CD8-positive, alpha-beta T cell (primary cell): ENCODE measurements at regions of chr2 and their contacts with region 1.

Region 1: GRCh38 chr2:71068218-71069035 is at the start of gene NAGK:
- DNase-seq: peak; percentile 95 to 99 (median 98)
- ATAC-seq: peak; percentile 82
- H3K4me3 ChIP-seq: peak within 1 kb of the TSS; percentile 77 to 87
- H3K4me3 Mint-ChIP-seq: peak within 1 kb of the TSS; percentile 95
- H3K27ac ChIP-seq: peak within 1 kb of the TSS; percentile 86 to 99
- H3K27ac Mint-ChIP-seq: peak within 1 kb of the TSS; percentile 99
- H3K4me1 ChIP-seq: peaks cover 43% of the 10 kb centered on the region
- H3K4me1 Mint-ChIP-seq: peaks cover 63% of the 10 kb centered on the region
- H3K27me3 ChIP-seq: no peaks in the 10 kb centered on the region
- H3K27me3 Mint-ChIP-seq: no peaks in the 10 kb centered on the region
- CTCF ChIP-seq: no peak
- total RNA-seq, gene NAGK: 58.9 to 67.7 TPM

Region 2: GRCh38 chr2:69386789-69387734 is 1681.4 kb before region 1 on chr2 and contains the start of gene GFPT1:
- CTCF ChIA-PET with region 1: no interaction called
- POLR2A ChIA-PET with region 1: no interaction called
- intact Hi-C with region 1: loop called in 1 of 2 experiments (anchors 10 kb)
- DNase-seq: peak; percentile 84 to 97 (median 93)
- ATAC-seq: peak; percentile 98
- H3K4me3 ChIP-seq: peak within 1 kb of the TSS; percentile 64 to 68
- H3K4me3 Mint-ChIP-seq: peak within 1 kb of the TSS; percentile 88
- H3K27ac ChIP-seq: peak within 1 kb of the TSS; percentile 65 to 70
- H3K27ac Mint-ChIP-seq: peak within 1 kb of the TSS; percentile 84
- H3K4me1 ChIP-seq: peaks cover 17% of the 10 kb centered on the region
- H3K4me1 Mint-ChIP-seq: peaks cover 45% of the 10 kb centered on the region
- H3K27me3 ChIP-seq: no peaks in the 10 kb centered on the region
- H3K27me3 Mint-ChIP-seq: no peaks in the 10 kb centered on the region
- CTCF ChIP-seq: no peak
- total RNA-seq, gene GFPT1: 26.5 to 30.9 TPM

Region 3: GRCh38 chr2:70977605-70978205 is 90.7 kb before region 1 on chr2:
- CTCF ChIA-PET with region 1: no interaction called
- POLR2A ChIA-PET with region 1: interaction called, 4 read pairs
- intact Hi-C with region 1: loop called in 1 of 2 experiments (anchors 1 kb)
- DNase-seq: peak in 2 of 9 experiments; percentile 49 to 55
- ATAC-seq: peak; percentile 27
- H3K4me3 ChIP-seq: peak overlapping the region; percentile 59 to 61
- H3K4me3 Mint-ChIP-seq: peak overlapping the region; percentile 85
- H3K27ac ChIP-seq: peak overlapping the region; percentile 44 to 73
- H3K27ac Mint-ChIP-seq: peak overlapping the region; percentile 89
- H3K4me1 ChIP-seq: peaks cover 17% of the 10 kb centered on the region
- H3K4me1 Mint-ChIP-seq: peaks cover 20% of the 10 kb centered on the region
- H3K27me3 ChIP-seq: no peaks in the 10 kb centered on the region
- H3K27me3 Mint-ChIP-seq: no peaks in the 10 kb centered on the region
- CTCF ChIP-seq: peak; percentile 4

Region 4: DNA sequence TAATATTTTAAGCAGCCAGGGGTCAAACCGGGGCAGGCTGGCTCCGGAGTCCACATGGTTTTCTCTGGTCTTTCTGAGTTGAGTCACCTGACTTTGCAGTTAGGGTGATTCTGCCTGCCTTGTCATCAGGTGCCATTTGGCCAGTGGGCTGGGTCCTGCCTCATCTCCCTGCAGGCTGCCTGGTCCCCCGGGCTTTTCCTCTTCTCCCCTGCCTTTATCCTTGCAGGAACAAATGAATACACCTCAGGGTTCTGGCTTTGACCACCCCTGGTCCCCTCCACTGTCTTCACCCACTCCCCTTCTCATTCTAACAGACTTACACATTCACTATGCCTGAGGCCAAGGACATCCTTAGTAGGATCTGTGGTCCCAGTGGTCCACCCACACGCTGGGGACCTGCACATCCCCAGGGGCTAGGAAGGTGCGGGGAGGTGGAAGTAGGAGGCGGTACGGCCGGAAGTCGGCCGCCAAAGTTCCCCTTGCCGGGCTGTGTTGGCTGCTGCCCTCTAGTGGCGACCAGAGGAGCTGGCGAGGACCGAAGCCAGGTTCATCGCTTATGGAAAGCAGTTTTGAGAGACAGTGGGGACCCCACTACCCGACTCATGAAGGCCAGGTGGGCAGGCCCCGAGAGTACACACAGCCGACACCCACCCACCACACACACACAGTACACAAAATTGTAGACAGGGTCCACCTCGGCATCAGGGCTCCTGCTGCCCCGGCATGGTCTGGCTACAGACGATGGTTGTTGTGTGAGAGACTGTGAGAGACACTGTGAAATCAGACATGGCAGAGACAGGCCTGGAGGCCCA is 67.4 kb before region 1 on chr2:
- CTCF ChIA-PET with region 1: interaction called, 6 read pairs
- POLR2A ChIA-PET with region 1: interaction called, 6 read pairs
- intact Hi-C with region 1: loop called in 1 of 2 experiments (anchors 5 kb)
- DNase-seq: peak; percentile 58 to 89 (median 81)
- ATAC-seq: peak; percentile 99
- H3K4me3 ChIP-seq: peak overlapping the region; percentile 39 to 44
- H3K4me3 Mint-ChIP-seq: peak overlapping the region; percentile 49
- H3K27ac ChIP-seq: peak overlapping the region in 1 of 2 experiments; percentile 48
- H3K27ac Mint-ChIP-seq: no peak overlapping the region
- H3K4me1 ChIP-seq: peaks cover 11% of the 10 kb centered on the region
- H3K4me1 Mint-ChIP-seq: peaks cover 12% of the 10 kb centered on the region
- H3K27me3 ChIP-seq: no peaks in the 10 kb centered on the region
- H3K27me3 Mint-ChIP-seq: peaks cover 5% of the 10 kb centered on the region
- CTCF ChIP-seq: peak; percentile 80

Region 5: GRCh38 chr2:71043531-71044407 is 24.7 kb before region 1 on chr2:
- CTCF ChIA-PET with region 1: no interaction called
- POLR2A ChIA-PET with region 1: no interaction called
- intact Hi-C with region 1: no loop called
- DNase-seq: no peak
- ATAC-seq: no peak
- H3K4me3 ChIP-seq: no peak overlapping the region
- H3K4me3 Mint-ChIP-seq: no peak overlapping the region
- H3K27ac ChIP-seq: no peak overlapping the region
- H3K27ac Mint-ChIP-seq: no peak overlapping the region
- H3K4me1 ChIP-seq: no peaks in the 10 kb centered on the region
- H3K4me1 Mint-ChIP-seq: no peaks in the 10 kb centered on the region
- H3K27me3 ChIP-seq: no peaks in the 10 kb centered on the region
- H3K27me3 Mint-ChIP-seq: peaks cover 7% of the 10 kb centered on the region
- CTCF ChIP-seq: no peak

Region 6: DNA sequence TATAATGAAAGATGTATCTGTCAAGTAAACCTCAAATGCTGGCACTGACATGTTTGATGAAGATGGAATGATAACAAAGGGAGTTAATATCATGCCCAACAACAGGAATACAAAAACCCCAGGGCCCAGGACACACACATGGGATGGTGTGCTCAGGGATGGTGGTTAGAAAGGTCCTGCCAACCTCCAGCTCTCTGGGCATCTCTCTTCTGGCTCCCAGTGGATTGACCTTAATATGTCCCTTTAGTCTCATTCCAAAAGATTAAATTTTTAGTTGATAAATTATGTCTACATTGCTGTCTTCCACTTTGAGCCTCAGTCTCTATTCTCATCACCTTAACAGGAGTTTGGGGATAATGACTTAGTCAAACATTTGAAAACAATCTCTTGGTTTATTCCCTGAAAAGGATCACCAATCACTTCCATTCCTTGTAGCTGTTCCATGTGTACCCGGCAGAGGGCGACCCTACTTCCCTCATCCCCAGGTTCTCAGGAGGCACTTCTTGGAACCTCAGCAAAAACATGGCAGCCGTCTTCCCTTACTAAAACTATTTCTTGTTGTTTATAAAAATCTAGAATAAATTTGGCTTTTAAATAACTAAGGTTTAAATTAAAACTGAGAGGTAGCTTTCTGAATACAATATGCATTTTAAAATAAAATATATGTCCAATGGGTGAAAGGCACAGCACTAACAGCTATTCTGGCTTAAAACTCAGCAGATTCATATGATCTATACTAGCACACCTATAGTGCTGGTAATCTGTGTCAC is 32.0 kb after region 1 on chr2:
- CTCF ChIA-PET with region 1: interaction called, 12 read pairs
- POLR2A ChIA-PET with region 1: interaction called, 7 read pairs
- intact Hi-C with region 1: no loop called
- DNase-seq: peak in 8 of 9 experiments; percentile 12 to 62 (median 44)
- ATAC-seq: peak; percentile 51
- H3K4me3 ChIP-seq: no peak overlapping the region
- H3K4me3 Mint-ChIP-seq: no peak overlapping the region
- H3K27ac ChIP-seq: no peak overlapping the region
- H3K27ac Mint-ChIP-seq: no peak overlapping the region
- H3K4me1 ChIP-seq: no peaks in the 10 kb centered on the region
- H3K4me1 Mint-ChIP-seq: no peaks in the 10 kb centered on the region
- H3K27me3 ChIP-seq: no peaks in the 10 kb centered on the region
- H3K27me3 Mint-ChIP-seq: peaks cover 7% of the 10 kb centered on the region
- CTCF ChIP-seq: peak; percentile 68

Region 7: GRCh38 chr2:71226965-71227560 is 158.6 kb after region 1 on chr2 and contains the start of gene PAIP2B:
- CTCF ChIA-PET with region 1: interaction called, 3 read pairs
- POLR2A ChIA-PET with region 1: interaction called, 10 read pairs
- intact Hi-C with region 1: loop called (anchors 1 to 2 kb)
- DNase-seq: peak; percentile 95 to 99 (median 96)
- ATAC-seq: peak; percentile 89
- H3K4me3 ChIP-seq: peak within 1 kb of the TSS; percentile 77 to 81
- H3K4me3 Mint-ChIP-seq: peak within 1 kb of the TSS; percentile 97
- H3K27ac ChIP-seq: peak within 1 kb of the TSS; percentile 79 to 81
- H3K27ac Mint-ChIP-seq: peak within 1 kb of the TSS; percentile 98
- H3K4me1 ChIP-seq: peaks cover 15% of the 10 kb centered on the region
- H3K4me1 Mint-ChIP-seq: peaks cover 31% of the 10 kb centered on the region
- H3K27me3 ChIP-seq: peaks cover 0 to 2% of the 10 kb centered on the region in 2 experiments
- H3K27me3 Mint-ChIP-seq: peaks cover 12% of the 10 kb centered on the region
- CTCF ChIP-seq: no peak
- total RNA-seq, gene PAIP2B: 1.7 to 1.8 TPM

Region 8: GRCh38 chr2:71276311-71277146 is 208.1 kb after region 1 on chr2:
- CTCF ChIA-PET with region 1: no interaction called
- POLR2A ChIA-PET with region 1: no interaction called
- intact Hi-C with region 1: no loop called
- DNase-seq: peak; percentile 58 to 88 (median 77)
- ATAC-seq: peak; percentile 99
- H3K4me3 ChIP-seq: peak overlapping the region; percentile 55 to 80
- H3K4me3 Mint-ChIP-seq: peak overlapping the region; percentile 76
- H3K27ac ChIP-seq: no peak overlapping the region
- H3K27ac Mint-ChIP-seq: no peak overlapping the region
- H3K4me1 ChIP-seq: peaks cover 16% of the 10 kb centered on the region
- H3K4me1 Mint-ChIP-seq: peaks cover 16% of the 10 kb centered on the region
- H3K27me3 ChIP-seq: peaks cover 18 to 28% of the 10 kb centered on the region in 2 experiments
- H3K27me3 Mint-ChIP-seq: peaks cover 70% of the 10 kb centered on the region
- CTCF ChIP-seq: no peak

Region 9: GRCh38 chr2:71331581-71332434 is 263.4 kb after region 1 on chr2 and contains the start of gene ZNF638:
- CTCF ChIA-PET with region 1: no interaction called
- POLR2A ChIA-PET with region 1: interaction called, 11 read pairs
- intact Hi-C with region 1: loop called (anchors 1 to 10 kb)
- DNase-seq: peak; percentile 83 to 98 (median 92)
- ATAC-seq: peak; percentile 97
- H3K4me3 ChIP-seq: peak within 1 kb of the TSS; percentile 74 to 98
- H3K4me3 Mint-ChIP-seq: peak within 1 kb of the TSS; percentile 99
- H3K27ac ChIP-seq: peak within 1 kb of the TSS; percentile 95 to 98
- H3K27ac Mint-ChIP-seq: peak within 1 kb of the TSS; percentile 100
- H3K4me1 ChIP-seq: peaks cover 40% of the 10 kb centered on the region
- H3K4me1 Mint-ChIP-seq: peaks cover 42% of the 10 kb centered on the region
- H3K27me3 ChIP-seq: no peaks in the 10 kb centered on the region
- H3K27me3 Mint-ChIP-seq: peaks cover 5% of the 10 kb centered on the region
- CTCF ChIP-seq: peak; percentile 66
- total RNA-seq, gene ZNF638: 61.9 to 71.1 TPM